ENCODE measurements at regions of chr11 and their contacts with region 1.

Region 1: GRCh38 chr11:124194698-124195410 is 11.7 kb downstream of the OR10D3 start:
- DNase-seq: peak in 9 of 14 experiments; percentile 8 to 65 (median 28)
- ATAC-seq: peak; percentile 39
- H3K4me3 ChIP-seq: no peak overlapping the region
- H3K4me3 Mint-ChIP-seq: no peak overlapping the region
- H3K27ac ChIP-seq: no peak overlapping the region
- H3K27ac Mint-ChIP-seq: no peak overlapping the region
- H3K4me1 ChIP-seq: no peaks in the 10 kb centered on the region
- H3K4me1 Mint-ChIP-seq: no peaks in the 10 kb centered on the region
- H3K27me3 ChIP-seq: no peaks in the 10 kb centered on the region
- H3K27me3 Mint-ChIP-seq: peaks cover 28% of the 10 kb centered on the region
- CTCF ChIP-seq: peak; percentile 65

Region 2: DNA sequence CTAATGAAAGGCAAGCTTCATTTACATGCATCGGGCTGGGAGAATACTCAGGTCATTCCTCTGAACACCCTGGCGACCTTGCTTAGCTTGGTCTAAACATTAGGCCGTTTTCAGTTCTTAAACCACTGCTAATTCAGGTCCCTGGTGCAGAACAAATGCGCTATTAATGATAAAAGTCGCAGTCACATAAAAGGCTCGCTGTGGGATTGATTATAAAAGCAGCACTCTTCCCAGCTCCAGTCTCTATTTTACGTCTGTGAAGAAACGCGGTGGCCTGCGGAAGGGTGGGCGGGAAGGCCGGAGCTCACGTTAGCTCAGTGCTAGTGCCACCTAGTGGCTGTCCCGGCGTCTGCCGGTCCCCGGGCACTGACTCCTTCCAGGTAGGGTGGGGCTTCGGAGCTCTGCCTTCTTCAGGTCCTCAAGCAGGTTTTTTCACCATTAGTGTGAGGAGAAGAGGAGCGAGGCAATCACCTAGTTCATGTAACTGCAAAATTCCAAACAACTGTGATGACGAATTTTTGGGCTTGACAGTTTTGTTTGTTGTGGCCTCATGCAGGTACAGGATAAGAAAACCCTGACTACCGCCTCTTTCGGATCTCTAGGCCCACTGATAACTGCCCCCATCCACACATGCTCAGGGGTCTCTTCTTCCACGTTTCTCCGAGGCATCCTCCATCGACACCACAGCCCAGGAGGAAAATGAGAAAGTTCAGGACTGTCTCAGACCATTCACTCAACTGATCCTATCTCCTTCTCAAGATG is 933.3 kb before region 1 on chr11:
- CTCF ChIA-PET with region 1: no interaction called
- POLR2A ChIA-PET with region 1: no interaction called
- intact Hi-C with region 1: no loop called
- DNase-seq: peak; percentile 24 to 77 (median 48)
- ATAC-seq: peak; percentile 73
- H3K4me3 ChIP-seq: no peak overlapping the region
- H3K4me3 Mint-ChIP-seq: peak overlapping the region; percentile 63
- H3K27ac ChIP-seq: no peak overlapping the region
- H3K27ac Mint-ChIP-seq: no peak overlapping the region
- H3K4me1 ChIP-seq: peaks cover 7% of the 10 kb centered on the region
- H3K4me1 Mint-ChIP-seq: peaks cover 5% of the 10 kb centered on the region
- H3K27me3 ChIP-seq: peaks cover 11 to 15% of the 10 kb centered on the region in 2 experiments
- H3K27me3 Mint-ChIP-seq: peaks cover 35% of the 10 kb centered on the region
- CTCF ChIP-seq: peak; percentile 82

Region 3: DNA sequence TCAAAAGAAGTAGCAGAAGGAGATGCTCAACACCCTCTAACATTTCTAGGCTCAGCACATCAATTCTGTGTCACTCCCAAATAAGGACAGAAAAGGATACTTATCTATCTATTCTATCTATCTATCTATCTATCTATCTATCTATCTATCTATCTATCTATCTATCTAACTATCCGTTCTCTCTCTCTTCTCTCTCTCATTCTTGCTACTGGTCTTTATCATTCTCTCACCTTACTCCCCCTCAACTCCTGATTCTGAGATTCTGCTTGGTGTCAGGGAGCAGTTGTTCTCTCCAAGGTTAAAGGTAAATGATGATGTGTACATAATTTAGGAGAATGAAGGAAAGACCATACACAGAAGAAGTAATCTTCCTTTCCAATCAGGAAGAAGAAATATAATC is 199.7 kb before region 1 on chr11 and contains the start of gene OR10G6:
- CTCF ChIA-PET with region 1: no interaction called
- POLR2A ChIA-PET with region 1: no interaction called
- intact Hi-C with region 1: no loop called
- DNase-seq: no peak
- ATAC-seq: no peak
- H3K4me3 ChIP-seq: no peak within 1 kb of the TSS
- H3K4me3 Mint-ChIP-seq: no peak within 1 kb of the TSS
- H3K27ac ChIP-seq: no peak within 1 kb of the TSS
- H3K27ac Mint-ChIP-seq: no peak within 1 kb of the TSS
- H3K4me1 ChIP-seq: no peaks in the 10 kb centered on the region
- H3K4me1 Mint-ChIP-seq: no peaks in the 10 kb centered on the region
- H3K27me3 ChIP-seq: no peaks in the 10 kb centered on the region
- H3K27me3 Mint-ChIP-seq: no peaks in the 10 kb centered on the region
- CTCF ChIP-seq: no peak
- total RNA-seq, gene OR10G6: not detected

Region 4: DNA sequence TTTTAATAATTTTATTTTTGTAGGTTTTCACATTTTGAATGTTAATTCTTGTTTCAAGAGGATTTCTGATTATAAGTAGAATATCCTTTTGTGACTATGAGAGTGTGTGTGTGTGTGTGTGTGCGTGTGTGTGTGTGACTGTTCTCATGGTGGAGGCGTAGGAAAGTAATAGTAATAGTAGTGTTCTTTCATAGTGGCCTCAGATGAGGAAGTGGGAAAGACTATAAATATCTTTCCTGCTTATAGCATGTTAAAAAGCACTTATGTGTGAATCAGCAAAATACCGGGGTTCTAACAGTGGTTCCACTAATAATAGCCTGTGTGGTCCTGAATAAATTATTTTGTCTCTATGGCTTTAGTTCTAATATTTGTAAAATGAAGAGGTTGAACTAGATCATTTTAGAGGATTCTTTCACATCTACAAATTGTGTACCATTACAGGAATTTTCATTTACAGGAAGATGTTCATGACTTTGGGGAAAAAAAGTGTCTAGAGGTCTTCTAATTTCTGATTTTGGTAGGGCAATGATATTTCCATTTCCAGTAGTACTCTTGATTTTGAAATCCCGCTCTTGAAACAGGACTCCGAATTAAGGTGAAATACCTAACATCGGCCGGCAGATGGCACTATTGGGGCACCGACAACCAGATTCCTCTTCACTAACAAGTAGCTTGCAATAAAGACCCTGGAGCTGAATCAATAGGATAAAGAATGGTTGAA is 123.8 kb before region 1 on chr11:
- CTCF ChIA-PET with region 1: interaction called, 8 read pairs
- POLR2A ChIA-PET with region 1: no interaction called
- intact Hi-C with region 1: loop called (anchors 1 to 2 kb)
- DNase-seq: peak; percentile 43 to 80 (median 54)
- ATAC-seq: peak; percentile 37
- H3K4me3 ChIP-seq: no peak overlapping the region
- H3K4me3 Mint-ChIP-seq: no peak overlapping the region
- H3K27ac ChIP-seq: no peak overlapping the region
- H3K27ac Mint-ChIP-seq: no peak overlapping the region
- H3K4me1 ChIP-seq: peaks cover 12% of the 10 kb centered on the region
- H3K4me1 Mint-ChIP-seq: peaks cover 7% of the 10 kb centered on the region
- H3K27me3 ChIP-seq: peaks cover 15 to 31% of the 10 kb centered on the region in 2 experiments
- H3K27me3 Mint-ChIP-seq: peaks cover 62% of the 10 kb centered on the region
- CTCF ChIP-seq: peak; percentile 88

Region 5: GRCh38 chr11:124177352-124177751 is 17.5 kb before region 1 on chr11:
- CTCF ChIA-PET with region 1: no interaction called
- POLR2A ChIA-PET with region 1: no interaction called
- intact Hi-C with region 1: no loop called
- DNase-seq: peak in 2 of 14 experiments; percentile 15 to 23
- ATAC-seq: no peak
- H3K4me3 ChIP-seq: no peak overlapping the region
- H3K4me3 Mint-ChIP-seq: no peak overlapping the region
- H3K27ac ChIP-seq: no peak overlapping the region
- H3K27ac Mint-ChIP-seq: no peak overlapping the region
- H3K4me1 ChIP-seq: no peaks in the 10 kb centered on the region
- H3K4me1 Mint-ChIP-seq: no peaks in the 10 kb centered on the region
- H3K27me3 ChIP-seq: peaks cover 0 to 4% of the 10 kb centered on the region in 2 experiments
- H3K27me3 Mint-ChIP-seq: no peaks in the 10 kb centered on the region
- CTCF ChIP-seq: no peak